ENCODE measurements at regions of chr16 and their contacts with region 1.

Region 1: DNA sequence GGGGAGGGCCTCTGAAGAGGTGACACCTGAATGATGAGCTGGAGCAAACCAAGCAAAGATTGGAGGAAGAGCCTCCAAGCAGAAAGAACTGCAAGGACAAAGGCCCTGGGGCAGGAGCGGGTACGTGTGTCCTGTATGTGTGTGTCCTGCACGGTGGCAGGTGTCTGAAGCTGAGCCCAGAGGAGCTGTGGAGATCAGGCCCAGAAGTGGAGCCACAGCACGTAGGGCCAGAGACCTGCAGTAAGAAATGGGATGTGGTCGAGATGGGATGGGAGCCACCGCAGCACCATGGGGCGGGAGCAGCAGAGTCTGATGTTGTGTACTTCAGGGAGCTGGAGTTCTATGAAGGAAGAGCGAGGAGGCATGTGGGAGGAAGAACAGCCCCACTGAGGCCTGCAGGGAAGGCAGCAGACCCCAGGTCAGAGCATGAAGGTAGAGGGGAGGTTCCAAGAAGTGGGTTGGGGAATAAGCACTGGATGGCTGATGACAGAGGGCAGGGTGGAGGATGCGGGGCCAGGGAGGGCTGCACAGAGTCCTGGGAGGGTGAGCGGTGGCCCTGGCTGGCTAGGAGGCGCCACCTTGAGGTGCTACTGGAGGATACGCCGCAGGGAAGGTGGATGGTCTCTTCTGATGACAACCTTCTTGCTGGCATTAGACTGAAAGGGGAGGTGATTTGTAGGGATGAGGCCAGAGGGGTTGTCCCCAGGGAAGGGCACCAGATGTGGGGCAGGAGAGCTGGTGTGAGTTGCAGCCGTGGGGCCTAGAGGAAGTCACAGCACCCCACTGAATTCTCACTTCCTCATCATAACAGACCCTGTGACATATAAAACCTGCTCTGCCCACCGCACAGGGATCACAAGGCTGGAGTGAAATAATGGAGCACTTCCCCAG is 10.6 kb upstream of the CETP start:
- DNase-seq: no peak
- ATAC-seq: peak; percentile 86
- H3K4me3 ChIP-seq: no peak overlapping the region
- H3K27ac ChIP-seq: no peak overlapping the region
- H3K4me1 ChIP-seq: peaks cover 18% of the 10 kb centered on the region
- H3K27me3 ChIP-seq: no peaks in the 10 kb centered on the region
- CTCF ChIP-seq: peak; percentile 71 to 90 (median 89)
- EP300 ChIP-seq: 0 out of 4 replicates have a peak, but pooled peaks of 1 of the 2 experiments have one; percentile 64
- POLR2A ChIP-seq: no peak
- RAD21 ChIP-seq: peak; percentile 83

Region 2: GRCh38 chr16:56860226-56861020 is 90.7 kb before region 1 on chr16:
- CTCF ChIA-PET with region 1: interaction called, 247 read pairs
- POLR2A ChIA-PET with region 1: interaction called, 5 read pairs
- RAD21 ChIA-PET with region 1: interaction called, 126 read pairs
- SMC1A ChIA-PET with region 1: interaction called, 86 read pairs
- in situ Hi-C with region 1: loop called (anchors 5 kb)
- intact Hi-C with region 1: no loop called
- DNase-seq: peak; percentile 75
- ATAC-seq: peak; percentile 93
- H3K4me3 ChIP-seq: 0 out of 2 replicates have a peak overlapping the region, but pooled peaks have one; percentile 13
- H3K27ac ChIP-seq: peak overlapping the region; percentile 52
- H3K4me1 ChIP-seq: peaks cover 33% of the 10 kb centered on the region
- H3K27me3 ChIP-seq: no peaks in the 10 kb centered on the region
- CTCF ChIP-seq: no peak
- EP300 ChIP-seq: no peak
- POLR2A ChIP-seq: no peak
- RAD21 ChIP-seq: no peak; the same call in 1 of the 2 replicates

Region 3: GRCh38 chr16:56911771-56912571 is 39.2 kb before region 1 on chr16:
- CTCF ChIA-PET with region 1: interaction called, 11 read pairs
- POLR2A ChIA-PET with region 1: interaction called, 306 read pairs
- RAD21 ChIA-PET with region 1: interaction called, 10 read pairs
- SMC1A ChIA-PET with region 1: interaction called, 10 read pairs
- in situ Hi-C with region 1: no loop called
- intact Hi-C with region 1: no loop called
- DNase-seq: peak; percentile 72
- ATAC-seq: peak; percentile 81
- H3K4me3 ChIP-seq: no peak overlapping the region; the same call in 1 of the 2 replicates
- H3K27ac ChIP-seq: peak overlapping the region; percentile 34
- H3K4me1 ChIP-seq: peaks cover 46% of the 10 kb centered on the region
- H3K27me3 ChIP-seq: no peaks in the 10 kb centered on the region
- CTCF ChIP-seq: no peak
- EP300 ChIP-seq: peak; percentile 100; a peak in 3 of 4 replicates
- POLR2A ChIP-seq: no peak
- RAD21 ChIP-seq: 0 out of 2 replicates have a peak, but pooled peaks have one; percentile 0

Region 4: GRCh38 chr16:56938422-56939156 is 12.5 kb before region 1 on chr16:
- CTCF ChIA-PET with region 1: interaction called, 25 read pairs
- POLR2A ChIA-PET with region 1: interaction called, 49 read pairs
- RAD21 ChIA-PET with region 1: interaction called, 20 read pairs
- SMC1A ChIA-PET with region 1: interaction called, 40 read pairs
- in situ Hi-C with region 1: no loop called
- intact Hi-C with region 1: no loop called
- DNase-seq: no peak
- ATAC-seq: peak; percentile 45
- H3K4me3 ChIP-seq: peak overlapping the region; percentile 24
- H3K27ac ChIP-seq: peak overlapping the region; percentile 5
- H3K4me1 ChIP-seq: peaks cover 56% of the 10 kb centered on the region
- H3K27me3 ChIP-seq: no peaks in the 10 kb centered on the region
- CTCF ChIP-seq: no peak
- EP300 ChIP-seq: peak; percentile 35 to 55; a peak in 2 of 4 replicates
- POLR2A ChIP-seq: peak; percentile 56
- RAD21 ChIP-seq: no peak